SK-N-SH (cell line): ENCODE measurements at regions of chr16 and their contacts with region 1.

Region 1: DNA sequence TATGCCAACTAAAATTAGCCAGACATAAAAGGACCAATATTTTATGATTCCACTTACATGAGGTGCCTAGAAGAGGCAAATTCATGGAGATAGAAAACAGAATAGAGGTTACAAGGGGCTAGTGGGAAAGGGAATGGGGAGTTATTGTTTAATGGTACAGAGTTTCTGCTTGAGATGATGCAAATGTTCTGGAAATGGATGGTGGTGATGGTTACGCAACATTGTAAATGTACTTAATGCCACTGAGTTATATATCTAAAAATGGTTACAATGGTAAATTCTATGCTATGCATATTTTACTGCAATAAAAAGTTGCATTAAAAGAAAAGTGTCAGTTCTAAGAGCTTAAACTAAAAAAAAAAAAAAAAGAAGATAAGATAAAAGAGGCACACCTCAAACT is 17.9 kb downstream of the MT1X start:
- DNase-seq: no peak
- H3K4me3 ChIP-seq: no peak overlapping the region
- H3K27ac ChIP-seq: no peak overlapping the region
- H3K4me1 ChIP-seq: no peaks in the 10 kb centered on the region; a peak in 1 of 4 replicates
- H3K27me3 ChIP-seq: no peaks in the 10 kb centered on the region
- CTCF ChIP-seq: no peak
- EP300 ChIP-seq: no peak
- RAD21 ChIP-seq: no peak

Region 2: GRCh38 chr16:56532714-56533113 is 167.5 kb before region 1 on chr16:
- CTCF ChIA-PET with region 1: interaction called, 10 read pairs
- POLR2A ChIA-PET with region 1: no interaction called
- DNase-seq: no peak
- H3K4me3 ChIP-seq: no peak overlapping the region
- H3K27ac ChIP-seq: no peak overlapping the region
- H3K4me1 ChIP-seq: 0 out of 4 replicates have a peak, but pooled peaks cover 0 to 8% of the 10 kb centered on the region in 2 experiments
- H3K27me3 ChIP-seq: no peaks in the 10 kb centered on the region; the same call in 1 of the 2 replicates
- CTCF ChIP-seq: peak; percentile 10; the same call in 1 of the 2 replicates
- EP300 ChIP-seq: no peak
- RAD21 ChIP-seq: no peak

Region 3: GRCh38 chr16:56589141-56590039 is 110.8 kb before region 1 on chr16 and contains the start of gene MT3:
- CTCF ChIA-PET with region 1: interaction called, 12 read pairs
- POLR2A ChIA-PET with region 1: no interaction called
- DNase-seq: peak; percentile 64
- H3K4me3 ChIP-seq: peak within 1 kb of the TSS; percentile 49 to 74
- H3K27ac ChIP-seq: no peak within 1 kb of the TSS
- H3K4me1 ChIP-seq: peaks cover 0 to 8% of the 10 kb centered on the region in 2 experiments; a peak in 1 of 4 replicates
- H3K27me3 ChIP-seq: no peaks in the 10 kb centered on the region; the same call in 1 of the 2 replicates
- CTCF ChIP-seq: no peak
- EP300 ChIP-seq: no peak
- RAD21 ChIP-seq: no peak
- polyA plus RNA-seq, gene MT3: 0.43 TPM in 1 of 2 replicates, not detected in the other

Region 4: GRCh38 chr16:56681939-56682702 is 18.1 kb before region 1 on chr16 and contains the start of gene MT1X:
- CTCF ChIA-PET with region 1: interaction called, 41 read pairs
- POLR2A ChIA-PET with region 1: no interaction called
- DNase-seq: peak; percentile 95
- H3K4me3 ChIP-seq: peak within 1 kb of the TSS; percentile 62 to 69
- H3K27ac ChIP-seq: peak within 1 kb of the TSS; percentile 56 to 77
- H3K4me1 ChIP-seq: peaks cover 0 to 26% of the 10 kb centered on the region in 2 experiments; a peak in 2 of 4 replicates
- H3K27me3 ChIP-seq: no peaks in the 10 kb centered on the region
- CTCF ChIP-seq: no peak
- EP300 ChIP-seq: 0 out of 4 replicates have a peak, but pooled peaks of 1 of the 2 experiments have one; percentile 27
- RAD21 ChIP-seq: no peak
- polyA plus RNA-seq, gene MT1X: 202 and 213 TPM in 2 replicates

Region 5: DNA sequence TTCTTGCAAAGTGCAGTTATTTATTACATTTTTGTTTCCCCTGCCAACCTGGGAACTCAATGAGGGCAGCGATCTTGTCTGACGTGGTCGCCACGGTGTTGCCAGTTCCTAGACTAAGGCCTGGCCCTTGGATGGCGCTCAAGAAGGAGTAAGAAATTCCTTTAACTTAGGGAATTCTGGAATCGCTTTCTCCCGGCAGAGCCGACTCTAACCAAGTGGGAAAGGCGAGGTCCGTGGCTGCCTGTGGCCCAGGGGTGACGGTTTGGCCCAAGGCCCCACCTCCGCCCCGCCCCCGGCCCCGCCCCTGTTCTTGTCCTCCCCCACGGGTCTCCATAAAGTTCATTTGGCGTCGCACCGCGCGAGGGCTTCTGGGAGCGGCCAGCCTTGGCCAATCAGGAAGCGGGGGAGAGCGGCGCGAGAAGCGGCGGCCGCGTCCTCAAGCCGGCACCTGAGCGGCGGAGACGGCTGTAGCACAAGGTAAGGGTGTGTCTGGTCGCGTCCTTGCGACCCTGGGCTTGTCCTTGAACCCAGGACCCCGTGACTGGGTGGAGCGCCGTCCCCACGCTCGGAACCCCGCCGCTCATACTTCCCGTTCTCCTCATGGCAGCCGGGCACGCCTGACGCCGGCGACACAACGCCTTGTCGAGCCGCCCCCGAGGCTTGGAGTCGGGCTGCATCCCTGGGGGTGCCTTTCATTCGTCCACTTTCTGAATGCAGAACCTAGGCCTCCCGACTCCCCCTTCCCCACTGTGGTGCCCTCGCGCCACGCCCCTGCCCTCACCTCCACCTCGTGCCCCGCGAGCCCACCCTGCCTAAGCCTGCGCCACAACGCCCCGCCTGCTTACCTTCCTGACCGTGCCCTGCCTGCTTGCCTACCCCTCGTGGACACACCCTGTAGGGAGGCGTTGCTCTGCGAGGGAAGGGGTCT is 29.8 kb after region 1 on chr16 and contains the start of gene NUP93:
- CTCF ChIA-PET with region 1: interaction called, 11 read pairs
- POLR2A ChIA-PET with region 1: no interaction called
- DNase-seq: peak; percentile 97
- H3K4me3 ChIP-seq: peak within 1 kb of the TSS; percentile 83 to 85
- H3K27ac ChIP-seq: peak within 1 kb of the TSS; percentile 82 to 87
- H3K4me1 ChIP-seq: peaks cover 6 to 10% of the 10 kb centered on the region in 2 experiments; a peak in 2 of 4 replicates
- H3K27me3 ChIP-seq: no peaks in the 10 kb centered on the region
- CTCF ChIP-seq: no peak
- EP300 ChIP-seq: no peak
- RAD21 ChIP-seq: no peak
- polyA plus RNA-seq, gene NUP93: 41.5 and 43.1 TPM in 2 replicates

Region 6: DNA sequence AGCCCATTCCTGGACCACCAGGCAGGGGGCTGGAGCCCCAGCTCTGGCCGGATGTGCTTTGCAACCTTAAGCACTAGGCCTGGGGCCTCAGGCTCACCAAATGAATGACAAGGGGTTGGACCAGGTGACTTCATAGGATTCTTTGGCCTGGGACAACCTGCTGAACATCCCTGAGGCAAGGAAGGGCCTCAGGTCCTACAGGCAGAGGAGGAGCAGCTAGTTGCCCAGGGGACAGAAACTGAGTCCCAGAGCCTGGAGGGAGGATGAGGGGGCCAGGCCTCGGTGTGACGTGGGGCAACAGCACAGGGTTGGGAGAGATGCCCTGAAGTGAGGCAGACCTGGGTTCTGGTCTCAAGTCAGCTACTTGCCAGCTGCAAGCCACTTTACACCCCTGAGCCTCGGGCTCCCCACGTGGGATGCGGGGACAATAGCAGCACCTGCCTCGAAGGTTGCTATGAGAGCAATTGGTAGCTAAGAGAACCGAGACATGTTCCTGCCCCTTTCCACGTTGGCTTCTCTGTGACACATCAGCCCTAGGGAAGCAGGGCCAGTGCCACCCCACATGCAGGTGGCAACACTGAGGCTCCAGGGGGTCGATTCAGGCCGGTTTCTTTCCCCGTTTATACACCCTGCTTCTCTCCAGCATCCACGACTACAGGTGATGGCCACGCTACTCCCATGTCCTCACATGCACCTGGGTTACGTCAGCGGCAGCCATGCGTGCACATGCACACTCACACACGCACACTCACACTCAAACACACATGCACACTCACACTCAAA is 1386.4 kb after region 1 on chr16:
- CTCF ChIA-PET with region 1: no interaction called
- POLR2A ChIA-PET with region 1: no interaction called
- DNase-seq: peak; percentile 29
- H3K4me3 ChIP-seq: no peak overlapping the region
- H3K27ac ChIP-seq: no peak overlapping the region
- H3K4me1 ChIP-seq: no peaks in the 10 kb centered on the region; a peak in 1 of 4 replicates
- H3K27me3 ChIP-seq: no peaks in the 10 kb centered on the region
- CTCF ChIP-seq: no peak
- EP300 ChIP-seq: no peak
- RAD21 ChIP-seq: no peak